T-cell (primary cell): ENCODE measurements at regions of chr15 and their contacts with region 1.

Region 1: GRCh38 chr15:78477295-78477694 is 30.1 kb upstream of the HYKK start:
- DNase-seq: no peak
- ATAC-seq: no peak
- H3K4me3 ChIP-seq: no peak overlapping the region
- H3K4me3 Mint-ChIP-seq: no peak overlapping the region
- H3K27ac ChIP-seq: no peak overlapping the region
- H3K27ac Mint-ChIP-seq: no peak overlapping the region
- H3K4me1 ChIP-seq: no peaks in the 10 kb centered on the region
- H3K4me1 Mint-ChIP-seq: no peaks in the 10 kb centered on the region
- H3K27me3 ChIP-seq: no peaks in the 10 kb centered on the region
- H3K27me3 Mint-ChIP-seq: no peaks in the 10 kb centered on the region

Region 2: GRCh38 chr15:78527325-78527724 is 50.0 kb after region 1 on chr15:
- CTCF ChIA-PET with region 1: no interaction called
- POLR2A ChIA-PET with region 1: interaction called in 1 of 2 experiments, 11 read pairs
- DNase-seq: no peak
- ATAC-seq: no peak
- H3K4me3 ChIP-seq: no peak overlapping the region
- H3K4me3 Mint-ChIP-seq: no peak overlapping the region
- H3K27ac ChIP-seq: no peak overlapping the region
- H3K27ac Mint-ChIP-seq: no peak overlapping the region
- H3K4me1 ChIP-seq: no peaks in the 10 kb centered on the region
- H3K4me1 Mint-ChIP-seq: no peaks in the 10 kb centered on the region
- H3K27me3 ChIP-seq: no peaks in the 10 kb centered on the region
- H3K27me3 Mint-ChIP-seq: no peaks in the 10 kb centered on the region